Naive thymus-derived CD4-positive, alpha-beta T cell (primary cell): ENCODE measurements at regions of chr14 and their contacts with region 1.

Region 1: GRCh38 chr14:66359500-66359899 is 126.7 kb upstream of the CCDC196 start:
- DNase-seq: peak in 7 of 9 donors; percentile 29 to 58 (median 42)
- ATAC-seq: peak; percentile 51
- H3K4me3 ChIP-seq: no peak overlapping the region
- H3K4me3 Mint-ChIP-seq: no peak overlapping the region
- H3K27ac ChIP-seq: no peak overlapping the region
- H3K27ac Mint-ChIP-seq: no peak overlapping the region
- H3K4me1 ChIP-seq: no peaks in the 10 kb centered on the region
- H3K4me1 Mint-ChIP-seq: peaks cover 0 to 2% (median 0%) of the 10 kb centered on the region in 7 donors
- H3K27me3 ChIP-seq: no peaks in the 10 kb centered on the region
- H3K27me3 Mint-ChIP-seq: peaks cover 0 to 18% (median 0%) of the 10 kb centered on the region in 5 donors

Region 2: GRCh38 chr14:65237941-65238340 is 1121.6 kb before region 1 on chr14:
- CTCF ChIA-PET with region 1: interaction called, 10 read pairs
- POLR2A ChIA-PET with region 1: no interaction called
- intact Hi-C with region 1: no loop called
- DNase-seq: no peak
- ATAC-seq: no peak
- H3K4me3 ChIP-seq: no peak overlapping the region
- H3K4me3 Mint-ChIP-seq: no peak overlapping the region
- H3K27ac ChIP-seq: no peak overlapping the region
- H3K27ac Mint-ChIP-seq: no peak overlapping the region
- H3K4me1 ChIP-seq: no peaks in the 10 kb centered on the region
- H3K4me1 Mint-ChIP-seq: peaks cover 5 to 18% (median 12%) of the 10 kb centered on the region in 7 donors
- H3K27me3 ChIP-seq: no peaks in the 10 kb centered on the region
- H3K27me3 Mint-ChIP-seq: no peaks in the 10 kb centered on the region

Region 3: DNA sequence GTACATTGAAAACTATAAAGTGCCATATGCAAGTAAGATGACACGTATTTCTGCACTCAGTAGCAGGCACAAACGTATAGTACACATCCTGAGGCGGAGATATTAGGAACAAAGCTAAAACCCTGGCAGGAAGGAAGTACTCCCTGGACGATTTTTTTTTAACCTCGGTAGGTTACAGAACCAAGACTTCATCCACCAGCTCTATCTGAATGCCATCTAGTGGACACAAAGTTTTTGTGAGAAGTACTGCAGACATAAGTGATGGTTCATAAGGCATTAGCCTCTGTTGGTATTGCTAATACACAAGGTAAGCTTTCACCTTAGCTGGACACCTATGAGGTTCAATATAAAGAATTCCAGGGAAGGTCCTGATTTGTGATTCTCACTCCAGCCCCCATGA is 43.7 kb after region 1 on chr14:
- CTCF ChIA-PET with region 1: interaction called, 23 read pairs
- POLR2A ChIA-PET with region 1: no interaction called
- intact Hi-C with region 1: loop called (anchors 1 to 2 kb)
- DNase-seq: peak in 5 of 9 donors; percentile 4 to 27 (median 18)
- ATAC-seq: peak; percentile 27
- H3K4me3 ChIP-seq: no peak overlapping the region
- H3K4me3 Mint-ChIP-seq: peak overlapping the region in 1 of 10 donors; percentile 28
- H3K27ac ChIP-seq: no peak overlapping the region
- H3K27ac Mint-ChIP-seq: peak overlapping the region in 1 of 9 donors; percentile 23
- H3K4me1 ChIP-seq: no peaks in the 10 kb centered on the region
- H3K4me1 Mint-ChIP-seq: peaks cover 0 to 6% (median 0%) of the 10 kb centered on the region in 7 donors
- H3K27me3 ChIP-seq: no peaks in the 10 kb centered on the region
- H3K27me3 Mint-ChIP-seq: peaks cover 0 to 5% (median 0%) of the 10 kb centered on the region in 5 donors

Region 4: DNA sequence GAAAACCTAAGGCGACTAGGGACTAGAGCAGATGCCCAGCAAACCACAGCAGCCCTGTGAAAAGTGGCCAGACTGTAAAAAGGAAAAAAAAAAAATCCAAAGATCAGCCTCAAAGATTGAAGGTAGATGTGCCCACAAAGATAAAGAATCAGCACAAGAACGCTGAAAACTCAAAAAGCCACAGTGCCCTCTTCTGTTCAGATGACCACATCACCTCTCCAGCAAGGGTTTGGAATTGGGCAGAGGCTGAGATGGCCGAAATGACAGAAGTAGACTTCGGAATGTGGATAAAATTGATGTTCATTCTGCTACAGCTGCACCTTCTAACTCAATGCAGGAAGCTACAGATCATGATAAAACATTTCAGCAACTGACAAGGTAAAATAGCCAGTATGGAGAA is 302.9 kb after region 1 on chr14:
- CTCF ChIA-PET with region 1: no interaction called
- POLR2A ChIA-PET with region 1: no interaction called
- intact Hi-C with region 1: loop called in 1 of 2 experiments (anchors 5 kb)
- DNase-seq: no peak
- ATAC-seq: no peak
- H3K4me3 ChIP-seq: no peak overlapping the region
- H3K4me3 Mint-ChIP-seq: no peak overlapping the region
- H3K27ac ChIP-seq: no peak overlapping the region
- H3K27ac Mint-ChIP-seq: no peak overlapping the region
- H3K4me1 ChIP-seq: no peaks in the 10 kb centered on the region
- H3K4me1 Mint-ChIP-seq: peaks cover 0 to 5% (median 0%) of the 10 kb centered on the region in 7 donors
- H3K27me3 ChIP-seq: no peaks in the 10 kb centered on the region
- H3K27me3 Mint-ChIP-seq: no peaks in the 10 kb centered on the region

Region 5: GRCh38 chr14:67111022-67111421 is 751.5 kb after region 1 on chr14:
- CTCF ChIA-PET with region 1: no interaction called
- POLR2A ChIA-PET with region 1: no interaction called
- intact Hi-C with region 1: loop called in 1 of 2 experiments (anchors 5 kb)
- DNase-seq: no peak
- ATAC-seq: no peak
- H3K4me3 ChIP-seq: no peak overlapping the region
- H3K4me3 Mint-ChIP-seq: no peak overlapping the region
- H3K27ac ChIP-seq: no peak overlapping the region
- H3K27ac Mint-ChIP-seq: no peak overlapping the region
- H3K4me1 ChIP-seq: no peaks in the 10 kb centered on the region
- H3K4me1 Mint-ChIP-seq: no peaks in the 10 kb centered on the region
- H3K27me3 ChIP-seq: no peaks in the 10 kb centered on the region
- H3K27me3 Mint-ChIP-seq: no peaks in the 10 kb centered on the region

Region 6: GRCh38 chr14:67285876-67286452 is 926.5 kb after region 1 on chr14:
- CTCF ChIA-PET with region 1: interaction called, 4 read pairs
- POLR2A ChIA-PET with region 1: no interaction called
- intact Hi-C with region 1: loop called in 1 of 2 experiments (anchors 1 kb)
- DNase-seq: peak in 6 of 9 donors; percentile 3 to 37 (median 30)
- ATAC-seq: no peak
- H3K4me3 ChIP-seq: no peak overlapping the region
- H3K4me3 Mint-ChIP-seq: no peak overlapping the region
- H3K27ac ChIP-seq: no peak overlapping the region
- H3K27ac Mint-ChIP-seq: peak overlapping the region in 1 of 9 donors; percentile 83
- H3K4me1 ChIP-seq: no peaks in the 10 kb centered on the region
- H3K4me1 Mint-ChIP-seq: peaks cover 0 to 5% (median 0%) of the 10 kb centered on the region in 7 donors
- H3K27me3 ChIP-seq: no peaks in the 10 kb centered on the region
- H3K27me3 Mint-ChIP-seq: no peaks in the 10 kb centered on the region